Calu3 (cell line): ENCODE measurements at regions of chr6 and their contacts with region 1.

Region 1: GRCh38 chr6:131782764-131783163 is 25.1 kb upstream of the ENPP1 start:
- DNase-seq: peak; percentile 43
- H3K4me3 Mint-ChIP-seq: no peak overlapping the region
- H3K27ac Mint-ChIP-seq: no peak overlapping the region
- H3K4me1 Mint-ChIP-seq: no peaks in the 10 kb centered on the region
- H3K27me3 Mint-ChIP-seq: peaks cover 36% of the 10 kb centered on the region
- CTCF ChIP-seq: peak; percentile 31

Region 2: GRCh38 chr6:131581523-131581922 is 201.2 kb before region 1 on chr6:
- CTCF ChIA-PET with region 1: no interaction called
- intact Hi-C with region 1: no loop called
- DNase-seq: no peak
- H3K4me3 Mint-ChIP-seq: no peak overlapping the region
- H3K27ac Mint-ChIP-seq: no peak overlapping the region
- H3K4me1 Mint-ChIP-seq: no peaks in the 10 kb centered on the region
- H3K27me3 Mint-ChIP-seq: no peaks in the 10 kb centered on the region
- CTCF ChIP-seq: no peak

Region 3: DNA sequence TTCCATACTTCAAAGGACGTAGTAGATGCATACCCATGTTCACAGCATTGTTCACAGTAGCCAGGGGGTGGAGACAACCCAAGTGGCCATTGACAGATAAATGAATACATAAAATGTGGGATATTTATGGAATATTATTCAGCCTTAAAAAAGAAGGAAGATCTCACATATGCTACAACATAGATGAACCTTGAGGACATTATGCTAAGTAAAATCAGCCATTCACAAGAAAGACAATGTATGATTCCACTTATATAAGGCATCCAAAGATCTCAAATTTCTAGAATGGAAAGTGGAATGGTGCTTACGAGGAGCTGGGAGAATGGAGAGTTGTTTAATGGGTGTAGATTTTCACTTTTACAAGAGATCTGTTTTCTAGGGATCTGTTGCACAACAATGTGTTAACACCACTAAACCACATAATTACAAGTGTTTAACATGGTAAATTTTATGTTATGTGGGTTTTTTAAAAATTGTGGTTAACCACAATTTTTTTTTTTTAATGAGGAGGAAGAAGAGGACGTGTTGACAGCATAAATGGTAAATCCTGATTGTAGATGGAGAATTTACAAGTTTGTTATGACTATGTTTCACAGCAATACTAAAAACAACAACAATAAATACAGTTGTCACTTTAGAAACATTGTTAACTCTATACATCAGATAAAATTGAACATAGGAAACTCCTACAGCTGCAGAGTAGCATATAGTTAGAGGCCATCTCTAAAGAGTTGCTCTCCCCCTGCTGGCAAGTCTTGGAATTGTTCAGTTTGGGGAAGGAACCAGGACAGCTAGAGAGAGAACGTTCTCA is 126.8 kb after region 1 on chr6:
- CTCF ChIA-PET with region 1: interaction called, 38 read pairs
- intact Hi-C with region 1: loop called (anchors 1 kb)
- DNase-seq: peak; percentile 84
- H3K4me3 Mint-ChIP-seq: no peak overlapping the region
- H3K27ac Mint-ChIP-seq: no peak overlapping the region
- H3K4me1 Mint-ChIP-seq: no peaks in the 10 kb centered on the region
- H3K27me3 Mint-ChIP-seq: peaks cover 11% of the 10 kb centered on the region
- CTCF ChIP-seq: peak; percentile 80